ENCODE measurements at regions of chr20 and their contacts with region 1.

Region 1: GRCh38 chr20:53413186-53413631 is 180.4 kb downstream of the ZNF217 start:
- DNase-seq: peak; percentile 12 to 70 (median 34)
- ATAC-seq: peak; percentile 24
- H3K4me3 ChIP-seq: no peak overlapping the region
- H3K4me3 Mint-ChIP-seq: no peak overlapping the region
- H3K27ac ChIP-seq: no peak overlapping the region
- H3K27ac Mint-ChIP-seq: no peak overlapping the region
- H3K4me1 ChIP-seq: peaks cover 7% of the 10 kb centered on the region
- H3K4me1 Mint-ChIP-seq: peaks cover 11% of the 10 kb centered on the region
- H3K27me3 ChIP-seq: no peaks in the 10 kb centered on the region
- H3K27me3 Mint-ChIP-seq: no peaks in the 10 kb centered on the region
- CTCF ChIP-seq: peak; percentile 53

Region 2: GRCh38 chr20:53202777-53203176 is 210.4 kb before region 1 on chr20:
- CTCF ChIA-PET with region 1: no interaction called
- POLR2A ChIA-PET with region 1: no interaction called
- intact Hi-C with region 1: no loop called
- DNase-seq: no peak
- ATAC-seq: no peak
- H3K4me3 ChIP-seq: no peak overlapping the region
- H3K4me3 Mint-ChIP-seq: no peak overlapping the region
- H3K27ac ChIP-seq: no peak overlapping the region
- H3K27ac Mint-ChIP-seq: no peak overlapping the region
- H3K4me1 ChIP-seq: peaks cover 3% of the 10 kb centered on the region
- H3K4me1 Mint-ChIP-seq: peaks cover 7% of the 10 kb centered on the region
- H3K27me3 ChIP-seq: no peaks in the 10 kb centered on the region
- H3K27me3 Mint-ChIP-seq: no peaks in the 10 kb centered on the region
- CTCF ChIP-seq: no peak

Region 3: GRCh38 chr20:53939572-53940359 is 526.6 kb after region 1 on chr20:
- CTCF ChIA-PET with region 1: interaction called, 5 read pairs
- POLR2A ChIA-PET with region 1: no interaction called
- intact Hi-C with region 1: loop called in 1 of 2 experiments (anchors 5 kb)
- DNase-seq: peak; percentile 35 to 85 (median 56)
- ATAC-seq: peak; percentile 75
- H3K4me3 ChIP-seq: no peak overlapping the region
- H3K4me3 Mint-ChIP-seq: no peak overlapping the region
- H3K27ac ChIP-seq: no peak overlapping the region
- H3K27ac Mint-ChIP-seq: no peak overlapping the region
- H3K4me1 ChIP-seq: peaks cover 17% of the 10 kb centered on the region
- H3K4me1 Mint-ChIP-seq: peaks cover 47% of the 10 kb centered on the region
- H3K27me3 ChIP-seq: no peaks in the 10 kb centered on the region
- H3K27me3 Mint-ChIP-seq: no peaks in the 10 kb centered on the region
- CTCF ChIP-seq: peak; percentile 76

Region 4: GRCh38 chr20:54062812-54063280 is 649.6 kb after region 1 on chr20:
- CTCF ChIA-PET with region 1: no interaction called
- POLR2A ChIA-PET with region 1: no interaction called
- intact Hi-C with region 1: loop called in 1 of 2 experiments (anchors 2 kb)
- DNase-seq: peak in 3 of 14 experiments; percentile 40 to 52 (median 48)
- ATAC-seq: no peak
- H3K4me3 ChIP-seq: no peak overlapping the region
- H3K4me3 Mint-ChIP-seq: no peak overlapping the region
- H3K27ac ChIP-seq: no peak overlapping the region
- H3K27ac Mint-ChIP-seq: no peak overlapping the region
- H3K4me1 ChIP-seq: peaks cover 8% of the 10 kb centered on the region
- H3K4me1 Mint-ChIP-seq: peaks cover 5% of the 10 kb centered on the region
- H3K27me3 ChIP-seq: no peaks in the 10 kb centered on the region
- H3K27me3 Mint-ChIP-seq: no peaks in the 10 kb centered on the region
- CTCF ChIP-seq: peak; percentile 73

Measured in CD4-positive, alpha-beta T cell (primary cell).